Mammary epithelial cell (primary cell): ENCODE measurements at regions of chr21 and their contacts with region 1.

Region 1: GRCh38 chr21:44626262-44626661 is 631 bp upstream of the KRTAP10-9 start:
- DNase-seq: no peak
- H3K4me3 ChIP-seq: no peak overlapping the region
- H3K27ac ChIP-seq: no peak overlapping the region
- H3K4me1 ChIP-seq: no peaks in the 10 kb centered on the region
- H3K27me3 ChIP-seq: no peaks in the 10 kb centered on the region
- CTCF ChIP-seq: no peak

Region 2: GRCh38 chr21:44551340-44551961 is 74.8 kb before region 1 on chr21 and contains the start of gene KRTAP10-2:
- CTCF ChIA-PET with region 1: no interaction called
- dilution Hi-C with region 1: no loop called
- in situ Hi-C with region 1: no loop called
- intact Hi-C with region 1: loop called (anchors 2 kb)
- DNase-seq: no peak
- H3K4me3 ChIP-seq: no peak within 1 kb of the TSS
- H3K27ac ChIP-seq: no peak within 1 kb of the TSS
- H3K4me1 ChIP-seq: peaks cover 16% of the 10 kb centered on the region
- H3K27me3 ChIP-seq: no peaks in the 10 kb centered on the region
- CTCF ChIP-seq: no peak
- total RNA-seq, gene KRTAP10-2: not detected